ENCODE measurements at regions of chrX and their contacts with region 1.

Region 1: GRCh38 chrX:17590892-17591740 is 146.2 kb upstream of the SCML1 start:
- DNase-seq: peak; percentile 70
- H3K4me3 Mint-ChIP-seq: no peak overlapping the region
- H3K27ac Mint-ChIP-seq: peak overlapping the region; percentile 82
- H3K4me1 Mint-ChIP-seq: peaks cover 44% of the 10 kb centered on the region
- H3K27me3 Mint-ChIP-seq: peaks cover 2% of the 10 kb centered on the region

Region 2: DNA sequence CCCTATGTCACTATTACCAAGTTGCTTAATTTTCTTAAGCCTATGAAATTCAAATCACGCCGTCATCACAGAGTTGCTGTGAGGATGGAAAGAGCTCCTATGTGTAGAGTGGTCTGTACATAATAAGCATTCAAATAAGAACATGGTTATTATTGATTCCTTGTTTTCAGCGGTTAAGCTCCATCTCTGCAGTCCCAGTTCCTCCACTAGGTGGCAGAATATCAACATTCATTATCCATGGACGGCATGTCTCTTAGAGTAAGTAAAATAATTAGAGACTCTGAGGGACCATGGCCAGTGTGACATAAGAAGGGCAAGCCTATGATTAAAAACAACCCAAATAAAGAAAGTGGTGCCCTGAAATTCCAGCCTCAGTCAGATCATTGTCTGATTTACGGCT is 348.6 kb before region 1 on chrX:
- CTCF ChIA-PET with region 1: no interaction called
- intact Hi-C with region 1: loop called (anchors 1 kb)
- DNase-seq: peak; percentile 59
- H3K4me3 Mint-ChIP-seq: no peak overlapping the region
- H3K27ac Mint-ChIP-seq: no peak overlapping the region
- H3K4me1 Mint-ChIP-seq: no peaks in the 10 kb centered on the region
- H3K27me3 Mint-ChIP-seq: no peaks in the 10 kb centered on the region

Region 3: DNA sequence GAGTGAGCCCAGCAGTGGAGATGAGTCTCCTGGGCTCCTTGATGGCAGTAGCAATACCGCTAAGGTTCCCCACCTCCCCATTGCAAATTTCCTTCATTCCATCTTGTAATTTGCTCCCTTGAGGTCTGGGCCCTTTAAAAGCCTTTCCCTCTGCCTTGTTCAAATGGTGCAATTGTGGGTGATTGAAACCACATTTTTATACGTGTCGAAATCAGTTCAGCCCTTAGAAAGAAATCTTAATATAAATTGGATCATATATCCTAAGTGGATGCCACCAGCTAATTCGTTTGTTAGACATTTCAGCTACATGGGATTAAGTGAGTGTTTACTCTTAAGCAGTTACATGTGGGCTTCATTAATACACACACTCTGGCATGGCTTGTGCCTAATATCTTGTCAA is 147.6 kb before region 1 on chrX:
- CTCF ChIA-PET with region 1: no interaction called
- intact Hi-C with region 1: no loop called
- DNase-seq: no peak
- H3K4me3 Mint-ChIP-seq: no peak overlapping the region
- H3K27ac Mint-ChIP-seq: no peak overlapping the region
- H3K4me1 Mint-ChIP-seq: peaks cover 7% of the 10 kb centered on the region
- H3K27me3 Mint-ChIP-seq: no peaks in the 10 kb centered on the region

Region 4: GRCh38 chrX:17655211-17656034 is 64.3 kb after region 1 on chrX:
- CTCF ChIA-PET with region 1: no interaction called
- intact Hi-C with region 1: loop called (anchors 2 kb)
- DNase-seq: peak; percentile 26
- H3K4me3 Mint-ChIP-seq: peak overlapping the region; percentile 88
- H3K27ac Mint-ChIP-seq: peak overlapping the region; percentile 91
- H3K4me1 Mint-ChIP-seq: peaks cover 21% of the 10 kb centered on the region
- H3K27me3 Mint-ChIP-seq: no peaks in the 10 kb centered on the region

Region 5: DNA sequence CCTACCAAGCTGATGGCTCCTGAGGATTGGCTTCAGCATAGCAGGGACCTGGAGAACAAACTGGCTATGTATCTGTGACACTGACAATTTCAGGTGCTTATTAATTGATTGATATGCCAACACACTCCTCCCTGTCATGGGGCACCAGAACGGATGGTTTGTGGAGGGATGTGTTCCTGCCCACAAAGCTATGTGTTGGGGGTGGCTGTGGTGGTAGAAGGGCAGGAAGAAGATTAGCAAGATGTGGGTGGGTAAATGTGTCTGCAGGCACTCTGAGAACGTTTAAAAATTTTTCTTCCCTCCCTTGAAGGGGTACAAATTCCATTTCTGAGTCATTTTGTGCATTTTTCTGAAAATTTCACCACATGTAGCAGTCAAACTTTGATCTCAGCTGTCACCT is 91.1 kb after region 1 on chrX:
- CTCF ChIA-PET with region 1: no interaction called
- intact Hi-C with region 1: loop called (anchors 2 kb)
- DNase-seq: peak; percentile 27
- H3K4me3 Mint-ChIP-seq: no peak overlapping the region
- H3K27ac Mint-ChIP-seq: peak overlapping the region; percentile 72
- H3K4me1 Mint-ChIP-seq: peaks cover 31% of the 10 kb centered on the region
- H3K27me3 Mint-ChIP-seq: no peaks in the 10 kb centered on the region

Region 6: DNA sequence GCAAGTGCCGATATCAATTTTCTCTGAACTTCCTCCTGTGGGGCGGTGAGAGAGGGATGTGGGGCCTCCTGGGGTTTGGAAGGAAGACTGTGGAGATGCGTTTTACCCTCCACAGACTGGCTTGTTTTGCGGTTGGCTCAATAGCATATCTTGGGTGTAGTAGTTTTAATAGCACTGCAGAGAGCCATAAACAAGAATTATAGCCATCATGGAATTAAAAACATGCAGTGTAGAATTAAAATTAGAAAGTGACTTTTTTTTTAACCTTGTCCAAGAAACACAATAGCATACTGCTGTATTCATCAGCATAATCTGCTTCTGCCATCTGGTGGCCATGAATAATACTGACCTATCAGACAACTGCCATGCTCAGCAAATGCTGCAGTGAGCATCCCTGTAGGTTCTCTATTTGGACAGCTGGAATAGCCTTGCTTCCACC is 98.9 kb after region 1 on chrX:
- CTCF ChIA-PET with region 1: no interaction called
- intact Hi-C with region 1: loop called (anchors 1 kb)
- DNase-seq: peak; percentile 69
- H3K4me3 Mint-ChIP-seq: no peak overlapping the region
- H3K27ac Mint-ChIP-seq: no peak overlapping the region
- H3K4me1 Mint-ChIP-seq: peaks cover 6% of the 10 kb centered on the region
- H3K27me3 Mint-ChIP-seq: no peaks in the 10 kb centered on the region